ENCODE measurements at regions of chr16 and their contacts with region 1.

Region 1: DNA sequence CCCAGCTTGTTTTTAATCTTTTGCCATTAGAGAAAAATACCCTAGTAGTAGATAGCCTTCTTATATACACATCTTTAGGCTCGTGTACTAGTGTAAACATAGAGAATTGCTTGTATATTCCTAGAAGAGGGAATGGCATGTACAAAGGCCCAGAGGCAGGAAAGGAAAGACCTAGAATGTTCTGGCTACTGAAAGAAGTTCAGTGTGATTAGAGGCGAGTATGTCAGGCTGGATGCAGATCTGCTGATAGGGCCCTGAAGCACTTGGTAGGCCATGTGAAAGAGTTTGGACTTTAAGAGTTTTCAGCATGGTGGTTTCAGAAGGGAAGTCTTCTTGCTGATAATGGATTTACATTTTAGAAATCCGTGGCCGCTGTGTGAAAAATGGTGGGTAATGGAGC is 17.4 kb downstream of the CTCF start:
- DNase-seq: no peak
- ATAC-seq: no peak
- H3K4me3 Mint-ChIP-seq: no peak overlapping the region
- H3K27ac Mint-ChIP-seq: no peak overlapping the region
- H3K4me1 Mint-ChIP-seq: peaks cover 12% of the 10 kb centered on the region
- H3K27me3 Mint-ChIP-seq: no peaks in the 10 kb centered on the region

Region 2: GRCh38 chr16:67333315-67333714 is 246.4 kb before region 1 on chr16:
- CTCF ChIA-PET with region 1: no interaction called
- POLR2A ChIA-PET with region 1: no interaction called
- intact Hi-C with region 1: no loop called
- DNase-seq: no peak
- ATAC-seq: no peak
- H3K4me3 Mint-ChIP-seq: no peak overlapping the region
- H3K27ac Mint-ChIP-seq: no peak overlapping the region
- H3K4me1 Mint-ChIP-seq: no peaks in the 10 kb centered on the region
- H3K27me3 Mint-ChIP-seq: peaks cover 3% of the 10 kb centered on the region

Region 3: GRCh38 chr16:67613808-67614207 is 34.1 kb after region 1 on chr16:
- CTCF ChIA-PET with region 1: no interaction called
- POLR2A ChIA-PET with region 1: no interaction called
- intact Hi-C with region 1: loop called in 1 of 2 experiments (anchors 5 kb)
- DNase-seq: peak; percentile 46
- ATAC-seq: peak; percentile 60
- H3K4me3 Mint-ChIP-seq: no peak overlapping the region
- H3K27ac Mint-ChIP-seq: no peak overlapping the region
- H3K4me1 Mint-ChIP-seq: no peaks in the 10 kb centered on the region
- H3K27me3 Mint-ChIP-seq: no peaks in the 10 kb centered on the region

Region 4: GRCh38 chr16:67663877-67664222 is 84.2 kb after region 1 on chr16:
- CTCF ChIA-PET with region 1: no interaction called
- POLR2A ChIA-PET with region 1: no interaction called
- intact Hi-C with region 1: no loop called
- DNase-seq: no peak
- ATAC-seq: no peak
- H3K4me3 Mint-ChIP-seq: no peak overlapping the region
- H3K27ac Mint-ChIP-seq: no peak overlapping the region
- H3K4me1 Mint-ChIP-seq: peaks cover 26% of the 10 kb centered on the region
- H3K27me3 Mint-ChIP-seq: no peaks in the 10 kb centered on the region